ENCODE measurements at regions of chr18 and their contacts with region 1.

Region 1: DNA sequence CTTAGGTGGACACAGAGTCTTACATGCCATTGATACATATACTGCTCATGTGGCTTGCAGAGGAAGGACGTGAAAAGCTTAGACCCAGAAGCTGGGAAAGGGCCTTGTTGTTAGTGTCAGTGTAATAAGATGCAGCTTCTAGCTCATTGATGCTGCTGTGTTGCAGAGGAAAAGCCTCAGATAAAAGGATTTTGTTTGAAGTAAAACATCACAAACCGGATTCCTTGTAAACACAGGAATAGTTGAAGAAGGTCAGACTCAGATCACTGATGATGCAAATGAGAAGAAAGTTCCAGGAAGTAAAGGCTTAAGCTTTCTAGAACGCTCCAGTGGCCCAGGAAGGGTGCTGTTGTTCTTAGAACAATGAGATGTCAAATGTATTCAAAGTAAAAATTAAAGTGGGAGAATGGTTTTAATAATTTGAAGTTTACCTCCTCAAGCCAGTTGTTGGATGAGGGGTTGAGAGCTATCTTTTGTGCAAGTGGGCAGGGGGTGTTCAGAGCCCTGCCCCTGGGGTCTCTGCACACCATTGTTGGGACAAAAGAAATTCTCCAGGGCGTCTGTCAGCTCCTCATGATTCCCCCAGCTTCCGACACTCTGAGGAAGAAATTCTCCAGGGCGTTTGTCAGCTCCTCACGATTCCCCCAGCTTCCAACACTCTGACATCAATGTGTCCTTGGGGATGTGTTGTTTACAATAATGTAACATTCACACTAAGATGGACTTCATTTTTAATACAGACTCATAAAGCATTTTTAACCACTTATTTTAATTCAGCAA is 61.3 kb upstream of the CHMP1B start:
- DNase-seq: no peak
- H3K4me3 ChIP-seq: no peak overlapping the region
- H3K27ac ChIP-seq: no peak overlapping the region
- H3K4me1 ChIP-seq: no peaks in the 10 kb centered on the region
- H3K27me3 ChIP-seq: no peaks in the 10 kb centered on the region
- CTCF ChIP-seq: no peak

Region 2: GRCh38 chr18:10504723-10505122 is 1285.2 kb before region 1 on chr18:
- CTCF ChIA-PET with region 1: no interaction called
- POLR2A ChIA-PET with region 1: interaction called, 10 read pairs
- intact Hi-C with region 1: no loop called
- DNase-seq: no peak
- H3K4me3 ChIP-seq: no peak overlapping the region
- H3K27ac ChIP-seq: no peak overlapping the region
- H3K4me1 ChIP-seq: no peaks in the 10 kb centered on the region
- H3K27me3 ChIP-seq: no peaks in the 10 kb centered on the region
- CTCF ChIP-seq: no peak

Region 3: DNA sequence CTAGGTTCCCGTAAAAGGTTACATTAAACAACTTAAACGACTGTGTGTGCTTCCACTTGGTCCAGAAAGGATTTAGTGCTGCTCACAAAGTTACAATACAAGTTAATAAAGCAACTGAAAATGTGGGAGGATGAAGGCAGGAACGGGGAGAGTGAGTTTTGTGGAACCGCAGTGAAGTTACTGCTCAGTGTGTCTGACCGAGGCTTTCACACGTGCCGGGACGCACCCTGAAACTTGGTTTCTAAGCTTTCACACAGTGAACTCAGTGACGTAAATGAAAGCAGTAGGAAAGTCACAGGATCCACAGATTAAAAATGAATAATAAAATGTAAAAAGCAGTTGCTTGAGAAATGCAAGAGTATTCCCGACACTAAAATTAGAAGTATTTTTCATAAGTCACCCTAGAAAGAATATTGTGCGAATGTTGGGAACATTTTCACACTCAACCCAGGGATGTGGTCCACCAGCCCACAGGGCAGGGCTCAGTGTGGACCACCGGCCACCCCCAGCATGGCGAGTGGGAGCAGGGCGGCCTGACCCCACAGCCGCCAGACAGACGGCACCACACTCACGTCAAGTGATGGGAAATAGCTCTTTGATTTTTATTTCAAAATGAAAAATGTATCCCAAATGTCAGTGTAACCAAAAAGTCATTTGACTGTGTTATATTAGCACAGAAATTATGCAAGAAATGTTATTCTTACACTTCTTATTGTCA is 28.7 kb after region 1 on chr18:
- CTCF ChIA-PET with region 1: no interaction called
- POLR2A ChIA-PET with region 1: no interaction called
- intact Hi-C with region 1: no loop called
- DNase-seq: no peak
- H3K4me3 ChIP-seq: no peak overlapping the region
- H3K27ac ChIP-seq: no peak overlapping the region
- H3K4me1 ChIP-seq: no peaks in the 10 kb centered on the region
- H3K27me3 ChIP-seq: peaks cover 22% of the 10 kb centered on the region
- CTCF ChIP-seq: no peak